IMR-90 (cell line): ENCODE measurements at regions of chr7 and their contacts with region 1.

Region 1: GRCh38 chr7:73522105-73522872 is at the start of gene BAZ1B:
- DNase-seq: peak; percentile 97
- ATAC-seq: peak; percentile 95
- H3K4me3 ChIP-seq: peak within 1 kb of the TSS; percentile 60
- H3K27ac ChIP-seq: peak within 1 kb of the TSS; percentile 98
- H3K4me1 ChIP-seq: peaks cover 6% of the 10 kb centered on the region
- H3K27me3 ChIP-seq: no peaks in the 10 kb centered on the region
- CTCF ChIP-seq: no peak
- POLR2A ChIP-seq: no peak
- RAD21 ChIP-seq: no peak
- total RNA-seq, gene BAZ1B: 45.0 and 60.8 TPM in 2 replicates

Region 2: GRCh38 chr7:73533742-73534141 is 11.5 kb after region 1 on chr7:
- CTCF ChIA-PET with region 1: no interaction called
- POLR2A ChIA-PET with region 1: interaction called, 10 read pairs
- dilution Hi-C with region 1: no loop called
- in situ Hi-C with region 1: no loop called
- intact Hi-C with region 1: no loop called
- DNase-seq: no peak
- ATAC-seq: no peak
- H3K4me3 ChIP-seq: no peak overlapping the region
- H3K27ac ChIP-seq: peak overlapping the region; percentile 33; the same call in 1 of the 2 replicates
- H3K4me1 ChIP-seq: no peaks in the 10 kb centered on the region
- H3K27me3 ChIP-seq: no peaks in the 10 kb centered on the region
- CTCF ChIP-seq: no peak
- POLR2A ChIP-seq: no peak
- RAD21 ChIP-seq: no peak

Region 3: DNA sequence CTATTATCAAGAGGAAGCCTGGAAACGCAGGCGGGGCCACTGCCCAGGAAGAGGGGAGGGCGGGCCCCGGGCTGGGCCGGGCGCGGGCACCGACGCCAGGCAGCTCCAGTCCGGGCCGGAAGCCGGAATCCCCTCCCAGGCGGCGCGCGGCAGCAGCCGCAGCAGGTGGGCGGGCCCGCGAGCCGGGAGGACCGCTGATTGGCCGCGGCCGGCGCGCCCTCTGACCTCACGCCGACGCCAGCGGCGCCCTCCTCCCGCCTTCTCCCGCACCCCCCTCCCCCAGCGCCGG is 34.8 kb after region 1 on chr7:
- CTCF ChIA-PET with region 1: no interaction called
- POLR2A ChIA-PET with region 1: no interaction called
- dilution Hi-C with region 1: no loop called
- in situ Hi-C with region 1: no loop called
- intact Hi-C with region 1: loop called (anchors 2 kb)
- DNase-seq: peak; percentile 90
- ATAC-seq: peak; percentile 92
- H3K4me3 ChIP-seq: peak overlapping the region; percentile 88
- H3K27ac ChIP-seq: peak overlapping the region; percentile 99
- H3K4me1 ChIP-seq: peaks cover 13% of the 10 kb centered on the region
- H3K27me3 ChIP-seq: no peaks in the 10 kb centered on the region
- CTCF ChIP-seq: no peak
- POLR2A ChIP-seq: no peak
- RAD21 ChIP-seq: no peak

Region 4: DNA sequence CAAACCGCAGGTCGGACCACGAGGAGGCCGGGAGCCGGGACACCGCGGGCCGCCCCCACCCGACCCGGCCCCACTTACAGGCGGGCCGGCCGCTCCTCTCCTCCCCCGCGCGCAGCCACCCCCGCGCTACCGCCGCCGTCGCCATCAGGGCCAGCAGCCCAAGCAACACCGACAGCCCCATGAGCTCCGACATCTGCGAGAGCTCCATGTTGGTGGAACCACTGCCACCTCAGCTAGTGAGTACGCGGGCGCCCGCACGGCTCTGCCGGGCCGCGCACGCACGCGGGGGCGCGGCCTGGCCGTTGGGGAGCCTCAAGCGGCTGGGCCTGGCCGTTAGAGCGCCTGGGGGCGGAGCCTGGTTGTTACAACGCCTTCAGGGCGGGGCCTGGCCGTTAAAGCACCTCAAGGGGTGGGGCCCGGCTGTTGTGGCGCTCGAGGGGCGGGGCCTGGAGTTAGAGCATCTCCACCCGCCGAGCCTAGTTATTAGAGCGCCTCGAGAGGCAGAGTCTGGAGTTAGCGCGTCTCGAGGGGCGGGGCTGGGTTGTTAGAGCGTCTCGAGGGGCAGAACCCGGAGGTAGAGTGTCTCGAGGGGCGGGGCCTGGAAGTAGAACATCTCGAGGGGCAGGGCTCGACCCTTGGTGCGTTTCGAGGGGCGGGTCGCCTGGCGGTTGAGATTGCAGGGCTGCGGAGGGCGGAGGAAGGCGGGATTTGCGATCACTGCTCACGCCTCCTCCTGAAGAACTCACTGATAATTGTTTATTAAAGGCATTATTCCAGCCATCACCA is 56.2 kb after region 1 on chr7 and contains the start of gene TBL2:
- CTCF ChIA-PET with region 1: no interaction called
- POLR2A ChIA-PET with region 1: interaction called, 10 read pairs
- dilution Hi-C with region 1: no loop called
- in situ Hi-C with region 1: no loop called
- intact Hi-C with region 1: no loop called
- DNase-seq: peak; percentile 97
- ATAC-seq: peak; percentile 96
- H3K4me3 ChIP-seq: peak within 1 kb of the TSS; percentile 70
- H3K27ac ChIP-seq: peak within 1 kb of the TSS; percentile 81
- H3K4me1 ChIP-seq: peaks cover 6% of the 10 kb centered on the region
- H3K27me3 ChIP-seq: no peaks in the 10 kb centered on the region
- CTCF ChIP-seq: peak; percentile 23; the same call in 1 of the 2 replicates
- POLR2A ChIP-seq: peak; percentile 97
- RAD21 ChIP-seq: no peak
- total RNA-seq, gene TBL2: 81.7 and 94.1 TPM in 2 replicates